Activated T-helper 1 cell treated with anti-CD3 and anti-CD28 coated beads, Interleukin-12 subunit alpha, Interleukin-12 subunit beta, Interleukin-2, Interleukin-4 antibody, amounts not matched to agents 30 ng/mL and 10 ng/mL and 1 ng/mL, durations not matched to agents 14 hours and 24 hours and 36 hours (primary cell): ENCODE measurements at regions of chr13 and their contacts with region 1.

Region 1: GRCh38 chr13:112942689-112943308 is 26.2 kb upstream of the MCF2L start:
- DNase-seq: peak; percentile 89
- H3K4me3 Mint-ChIP-seq: peak overlapping the region; percentile 93
- H3K27ac Mint-ChIP-seq: peak overlapping the region; percentile 60
- H3K4me1 Mint-ChIP-seq: peaks cover 8% of the 10 kb centered on the region
- H3K27me3 Mint-ChIP-seq: peaks cover 34% of the 10 kb centered on the region

Region 2: GRCh38 chr13:113029487-113030258 is 86.9 kb after region 1 on chr13:
- intact Hi-C with region 1: loop called (anchors 1 kb)
- DNase-seq: no peak
- H3K4me3 Mint-ChIP-seq: no peak overlapping the region
- H3K27ac Mint-ChIP-seq: no peak overlapping the region
- H3K4me1 Mint-ChIP-seq: no peaks in the 10 kb centered on the region
- H3K27me3 Mint-ChIP-seq: peaks cover 2% of the 10 kb centered on the region

Region 3: DNA sequence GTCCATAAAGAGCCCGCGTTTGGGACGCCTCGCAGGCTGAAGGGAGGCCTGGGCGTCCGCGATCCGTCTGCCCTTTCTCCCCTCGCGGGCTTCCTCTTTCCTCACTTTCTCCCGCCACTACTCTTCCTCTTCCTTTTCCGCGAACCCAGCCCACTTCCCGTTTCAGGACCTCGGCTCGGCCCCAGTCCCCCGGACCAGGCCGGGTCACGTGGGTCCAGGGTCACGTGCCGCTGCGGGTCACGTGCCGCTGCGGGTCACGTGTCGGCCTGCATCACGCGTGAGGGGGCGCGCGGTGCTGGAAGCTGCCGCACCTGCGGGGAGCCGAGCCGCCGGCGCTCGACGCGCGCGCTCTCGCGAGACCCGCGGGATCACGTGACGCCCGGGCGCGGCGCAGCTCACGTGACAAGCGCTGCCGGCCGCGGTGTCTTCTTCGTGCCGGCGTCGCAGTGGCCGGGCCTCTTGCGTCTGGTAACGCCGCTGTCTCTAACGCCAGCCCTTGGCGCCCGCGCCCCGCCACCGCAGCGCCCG is 354.1 kb after region 1 on chr13 and contains the start of gene LAMP1:
- intact Hi-C with region 1: loop called (anchors 2 kb)
- DNase-seq: peak; percentile 98
- H3K4me3 Mint-ChIP-seq: peak within 1 kb of the TSS; percentile 97
- H3K27ac Mint-ChIP-seq: peak within 1 kb of the TSS; percentile 98
- H3K4me1 Mint-ChIP-seq: peaks cover 20% of the 10 kb centered on the region
- H3K27me3 Mint-ChIP-seq: peaks cover 27% of the 10 kb centered on the region
- total RNA-seq, gene LAMP1: 59.4 and 60.3 TPM in 2 replicates

Region 4: DNA sequence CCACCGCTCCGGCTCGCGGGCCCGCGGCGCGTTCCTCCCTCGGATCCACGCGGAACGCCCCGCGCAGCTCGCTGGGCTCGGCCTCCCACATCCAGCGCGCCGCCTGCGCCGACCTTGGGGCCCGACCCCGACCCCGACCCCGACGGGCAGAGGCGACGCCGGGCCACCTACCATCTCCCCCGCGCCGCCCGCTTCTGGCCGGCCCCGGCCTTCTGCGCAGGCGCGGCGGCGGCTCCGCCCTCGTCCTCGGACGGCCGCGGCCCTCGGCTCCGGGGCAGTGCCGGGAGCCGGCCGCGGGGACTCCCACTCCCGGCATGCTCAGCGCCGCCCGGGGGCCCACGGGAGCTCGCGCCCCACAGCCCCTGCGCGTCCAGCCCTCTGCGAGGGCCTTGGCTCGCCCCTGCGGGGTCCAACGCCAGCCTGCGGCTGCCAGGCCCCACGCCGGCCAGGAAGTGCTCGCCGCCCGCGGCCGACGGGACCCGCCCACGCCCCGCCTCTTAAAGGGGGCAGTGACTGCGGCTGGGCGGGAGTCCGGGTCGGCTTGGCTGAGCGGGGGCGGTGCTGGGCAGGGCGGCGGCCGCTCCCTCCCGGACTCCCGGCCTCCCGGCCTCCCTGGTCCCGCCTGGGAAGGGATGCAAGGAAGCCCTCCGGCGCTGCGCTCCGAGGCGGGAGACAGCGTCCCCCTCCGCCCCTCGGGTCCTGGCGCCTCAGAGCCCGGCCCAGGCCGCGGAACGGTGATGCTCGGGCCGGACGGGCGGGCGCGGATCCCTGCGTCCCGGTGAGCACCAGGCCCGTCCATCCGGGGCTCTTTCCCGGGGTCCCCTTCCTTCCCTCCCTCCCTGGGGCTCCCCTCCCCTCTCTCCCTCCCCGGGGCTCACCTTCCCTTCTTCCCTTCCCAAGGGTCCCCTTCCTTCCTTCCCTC is 548.0 kb after region 1 on chr13 and contains the start of gene DCUN1D2:
- intact Hi-C with region 1: loop called (anchors 1 kb)
- DNase-seq: peak; percentile 79
- H3K4me3 Mint-ChIP-seq: peak within 1 kb of the TSS; percentile 90
- H3K27ac Mint-ChIP-seq: peak within 1 kb of the TSS; percentile 78
- H3K4me1 Mint-ChIP-seq: peaks cover 62% of the 10 kb centered on the region
- H3K27me3 Mint-ChIP-seq: peaks cover 3% of the 10 kb centered on the region
- total RNA-seq, gene DCUN1D2: 28.7 and 31.2 TPM in 2 replicates